Ascending aorta (tissue), 2 donors: ENCODE measurements at regions of chr13 and their contacts with region 1.

Region 1: DNA sequence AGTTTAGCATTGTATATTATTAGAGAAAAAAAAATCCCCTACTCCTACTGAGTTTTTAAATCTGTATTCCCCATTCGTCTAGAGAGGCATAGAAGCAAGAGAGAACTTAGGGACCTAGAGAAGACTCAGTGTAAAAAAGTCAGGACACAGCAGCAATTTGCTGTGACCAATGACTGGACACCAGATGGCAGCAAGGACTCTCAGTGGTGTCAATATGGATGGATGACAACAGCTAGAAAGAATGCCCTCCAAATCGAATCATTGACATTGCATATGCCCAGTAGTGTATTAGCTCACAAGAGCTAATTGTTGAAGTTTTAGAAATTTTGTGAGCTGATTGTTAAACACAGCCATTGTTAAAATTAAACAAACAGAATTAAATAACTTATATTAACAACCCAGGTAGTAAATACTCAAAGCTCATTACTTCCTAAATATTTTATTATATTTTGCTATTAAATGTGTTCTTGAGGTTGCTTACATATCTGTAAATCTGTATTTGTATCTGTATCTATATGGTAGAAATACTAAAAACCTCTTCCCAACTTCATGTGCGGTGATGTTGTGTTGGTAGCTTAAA is 43.9 kb downstream of the SIAH3 start:
- DNase-seq: peak in 1 of 2 donors; percentile 30
- H3K4me3 ChIP-seq: no peak overlapping the region
- H3K27ac ChIP-seq: no peak overlapping the region
- H3K4me1 ChIP-seq: no peaks in the 10 kb centered on the region
- H3K27me3 ChIP-seq: no peaks in the 10 kb centered on the region
- CTCF ChIP-seq: peak in 2 of 3 experiments; percentile 7 to 38

Region 2: GRCh38 chr13:45292176-45292575 is 515.4 kb before region 1 on chr13:
- intact Hi-C with region 1: no loop called
- DNase-seq: no peak
- H3K4me3 ChIP-seq: no peak overlapping the region
- H3K27ac ChIP-seq: no peak overlapping the region
- H3K4me1 ChIP-seq: no peaks in the 10 kb centered on the region
- H3K27me3 ChIP-seq: no peaks in the 10 kb centered on the region
- CTCF ChIP-seq: no peak

Region 3: DNA sequence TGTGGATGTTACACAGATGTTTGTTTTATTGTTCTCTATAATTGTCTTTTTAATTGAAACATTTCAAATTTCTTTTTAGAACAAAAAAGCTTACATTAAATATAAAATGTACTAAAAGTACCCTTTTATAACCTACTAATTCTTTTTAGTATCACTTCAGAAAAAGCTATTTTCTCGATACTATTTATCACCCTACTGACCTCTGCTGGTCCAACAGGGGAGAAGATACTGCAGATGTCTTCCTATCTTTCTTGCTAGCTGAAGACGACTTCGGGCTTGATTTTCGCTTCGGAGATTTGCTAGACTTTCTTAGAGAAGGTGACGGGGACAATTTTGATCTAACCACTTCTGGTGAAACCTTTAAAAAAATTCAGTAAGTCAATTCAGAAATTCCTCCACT is 202.5 kb after region 1 on chr13:
- intact Hi-C with region 1: no loop called
- DNase-seq: no peak
- H3K4me3 ChIP-seq: no peak overlapping the region
- H3K27ac ChIP-seq: no peak overlapping the region
- H3K4me1 ChIP-seq: no peaks in the 10 kb centered on the region
- H3K27me3 ChIP-seq: no peaks in the 10 kb centered on the region
- CTCF ChIP-seq: no peak

Region 4: GRCh38 chr13:46160471-46161066 is 353.0 kb after region 1 on chr13:
- intact Hi-C with region 1: loop called (anchors 5 kb)
- DNase-seq: no peak
- H3K4me3 ChIP-seq: no peak overlapping the region
- H3K27ac ChIP-seq: no peak overlapping the region
- H3K4me1 ChIP-seq: no peaks in the 10 kb centered on the region
- H3K27me3 ChIP-seq: no peaks in the 10 kb centered on the region
- CTCF ChIP-seq: peak; percentile 41 to 74 (median 60)